ENCODE measurements at regions of chr12 and their contacts with region 1.

Region 1: DNA sequence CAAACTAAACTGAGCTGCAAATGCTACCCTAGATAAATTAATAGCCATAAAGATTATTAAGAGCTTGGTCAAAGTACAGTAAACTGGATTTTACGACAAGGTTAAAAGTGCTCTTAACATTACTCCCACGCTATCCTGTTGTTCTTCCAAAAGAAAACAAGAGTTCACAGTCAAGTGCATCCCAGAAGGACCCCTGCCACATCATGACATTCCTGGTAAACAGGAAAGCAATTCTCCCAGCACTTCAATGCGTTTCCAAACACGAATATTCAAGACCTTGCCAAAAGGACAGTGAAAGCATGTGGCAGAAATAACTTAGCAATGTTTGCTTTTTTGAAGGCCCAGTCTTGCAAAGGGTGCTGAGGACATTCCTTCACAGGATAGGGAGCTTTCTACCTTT is 11.2 kb downstream of the SPRING1 start:
- DNase-seq: no peak
- H3K4me3 ChIP-seq: no peak overlapping the region
- H3K27ac ChIP-seq: no peak overlapping the region
- H3K4me1 ChIP-seq: no peaks in the 10 kb centered on the region
- H3K27me3 ChIP-seq: no peaks in the 10 kb centered on the region
- CTCF ChIP-seq: no peak
- POLR2A ChIP-seq: no peak

Region 2: GRCh38 chr12:115251727-115252126 is 1475.0 kb before region 1 on chr12:
- intact Hi-C with region 1: loop called (anchors 5 kb)
- DNase-seq: no peak
- H3K4me3 ChIP-seq: no peak overlapping the region
- H3K27ac ChIP-seq: no peak overlapping the region
- H3K4me1 ChIP-seq: no peaks in the 10 kb centered on the region
- H3K27me3 ChIP-seq: no peaks in the 10 kb centered on the region
- CTCF ChIP-seq: no peak
- POLR2A ChIP-seq: no peak

Region 3: DNA sequence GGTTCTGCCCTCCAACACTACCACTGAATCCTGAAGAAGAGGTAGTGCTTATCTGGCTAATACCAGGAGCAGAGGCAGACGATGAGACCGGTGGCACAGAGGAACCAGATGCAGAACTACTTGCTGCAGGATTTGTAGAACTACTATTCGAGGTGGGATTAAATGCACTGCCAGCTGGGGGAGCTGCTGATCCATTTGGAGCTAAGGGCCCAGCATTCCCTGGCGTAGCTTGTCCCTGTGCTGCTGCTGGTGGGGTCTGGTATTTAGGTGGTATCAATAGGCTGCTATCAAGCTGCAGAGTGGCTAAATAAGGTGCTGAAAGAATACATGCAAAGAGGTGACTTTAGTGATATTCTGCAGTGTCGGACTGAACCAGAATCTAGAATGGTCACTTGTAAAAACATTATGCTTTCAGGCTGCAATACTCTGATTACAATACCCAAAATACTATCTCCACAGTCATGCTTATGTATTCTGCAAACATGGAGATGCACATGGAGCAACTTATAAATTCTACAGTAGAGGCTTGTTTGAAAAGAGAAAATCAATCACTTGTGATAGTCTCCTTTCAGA is 743.4 kb before region 1 on chr12:
- intact Hi-C with region 1: no loop called
- DNase-seq: no peak
- H3K4me3 ChIP-seq: no peak overlapping the region
- H3K27ac ChIP-seq: no peak overlapping the region
- H3K4me1 ChIP-seq: no peaks in the 10 kb centered on the region
- H3K27me3 ChIP-seq: no peaks in the 10 kb centered on the region
- CTCF ChIP-seq: no peak
- POLR2A ChIP-seq: no peak

Region 4: GRCh38 chr12:116559162-116559935 is 167.3 kb before region 1 on chr12 and contains the start of gene MAP1LC3B2:
- intact Hi-C with region 1: no loop called
- DNase-seq: peak in 1 of 2 donors; percentile 79
- H3K4me3 ChIP-seq: peak within 1 kb of the TSS in 2 of 3 donors; percentile 13 to 44
- H3K27ac ChIP-seq: peak within 1 kb of the TSS; percentile 87
- H3K4me1 ChIP-seq: peaks cover 3 to 5% of the 10 kb centered on the region in 2 donors
- H3K27me3 ChIP-seq: no peaks in the 10 kb centered on the region
- CTCF ChIP-seq: no peak
- POLR2A ChIP-seq: no peak
- total RNA-seq, gene MAP1LC3B2: 0.98 to 8.5 (median 1.1) TPM

Region 5: GRCh38 chr12:116662612-116663144 is 64.0 kb before region 1 on chr12:
- intact Hi-C with region 1: no loop called
- DNase-seq: no peak
- H3K4me3 ChIP-seq: peak overlapping the region in 2 of 3 donors; percentile 7 to 26
- H3K27ac ChIP-seq: peak overlapping the region; percentile 29 to 70
- H3K4me1 ChIP-seq: no peaks in the 10 kb centered on the region
- H3K27me3 ChIP-seq: no peaks in the 10 kb centered on the region
- CTCF ChIP-seq: no peak
- POLR2A ChIP-seq: no peak